CD8-positive, alpha-beta memory T cell (primary cell): ENCODE measurements at regions of chr4 and their contacts with region 1.

Region 1: GRCh38 chr4:147683717-147684700 is at the start of gene PRMT9:
- DNase-seq: peak; percentile 76 to 88 (median 85)
- H3K4me3 ChIP-seq: peak within 1 kb of the TSS; percentile 81
- H3K4me3 Mint-ChIP-seq: peak within 1 kb of the TSS; percentile 81 to 99 (median 96)
- H3K27ac ChIP-seq: peak within 1 kb of the TSS; percentile 93
- H3K27ac Mint-ChIP-seq: peak within 1 kb of the TSS; percentile 91 to 99 (median 98)
- H3K4me1 ChIP-seq: peaks cover 13% of the 10 kb centered on the region
- H3K4me1 Mint-ChIP-seq: peaks cover 30 to 45% (median 43%) of the 10 kb centered on the region in 3 donors
- H3K27me3 ChIP-seq: no peaks in the 10 kb centered on the region
- H3K27me3 Mint-ChIP-seq: peaks cover 0 to 10% of the 10 kb centered on the region in 2 donors
- total RNA-seq, gene PRMT9: 5.5 to 6.9 TPM

Region 2: GRCh38 chr4:145936142-145936996 is 1747.6 kb before region 1 on chr4:
- CTCF ChIA-PET with region 1: no interaction called
- POLR2A ChIA-PET with region 1: interaction called, 11 read pairs
- DNase-seq: peak; percentile 48 to 83 (median 71)
- H3K4me3 ChIP-seq: peak overlapping the region; percentile 69
- H3K4me3 Mint-ChIP-seq: peak overlapping the region; percentile 88 to 97 (median 96)
- H3K27ac ChIP-seq: peak overlapping the region; percentile 41
- H3K27ac Mint-ChIP-seq: peak overlapping the region; percentile 75 to 98 (median 96)
- H3K4me1 ChIP-seq: no peaks in the 10 kb centered on the region
- H3K4me1 Mint-ChIP-seq: peaks cover 29 to 53% (median 42%) of the 10 kb centered on the region in 3 donors
- H3K27me3 ChIP-seq: no peaks in the 10 kb centered on the region
- H3K27me3 Mint-ChIP-seq: peaks cover 0 to 8% of the 10 kb centered on the region in 2 donors

Region 3: DNA sequence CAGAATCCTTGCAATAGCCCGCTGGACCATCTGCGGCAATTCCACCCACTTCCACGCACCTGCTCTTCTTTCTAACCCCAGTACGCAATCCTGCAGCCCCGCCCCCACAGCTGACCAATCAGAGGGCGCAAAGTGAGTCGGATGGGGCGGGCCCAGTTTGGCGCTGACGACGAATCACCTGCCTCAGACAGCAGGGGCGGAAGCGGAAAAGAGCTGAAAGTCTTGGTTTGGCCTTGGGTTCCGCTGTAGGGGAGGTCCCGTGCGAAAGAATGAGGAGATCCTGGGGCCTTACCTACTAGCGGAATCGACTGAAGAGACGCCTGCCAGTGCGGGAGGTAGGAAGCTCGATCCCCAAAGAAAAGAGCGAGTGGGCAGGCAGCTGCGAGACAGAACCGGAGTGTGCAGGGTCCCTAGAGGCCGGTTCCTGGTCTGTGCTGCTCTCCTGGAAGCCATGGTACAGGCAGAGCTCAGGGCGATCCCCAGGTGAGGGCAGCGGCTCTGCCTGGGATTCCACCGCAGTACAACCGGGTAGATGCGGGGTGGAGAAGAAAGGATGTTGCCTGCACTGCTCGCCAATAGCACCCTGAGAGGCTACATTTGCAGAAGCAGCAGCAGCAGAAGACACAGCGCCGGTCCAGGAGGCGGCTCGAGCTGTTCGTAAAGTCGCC is 66.7 kb before region 1 on chr4 and contains the start of gene TMEM184C:
- CTCF ChIA-PET with region 1: no interaction called
- POLR2A ChIA-PET with region 1: interaction called, 34 read pairs
- DNase-seq: peak; percentile 96 to 98 (median 98)
- H3K4me3 ChIP-seq: peak within 1 kb of the TSS; percentile 95
- H3K4me3 Mint-ChIP-seq: peak within 1 kb of the TSS; percentile 89 to 100 (median 94)
- H3K27ac ChIP-seq: peak within 1 kb of the TSS; percentile 89
- H3K27ac Mint-ChIP-seq: peak within 1 kb of the TSS; percentile 82 to 100 (median 96)
- H3K4me1 ChIP-seq: peaks cover 37% of the 10 kb centered on the region
- H3K4me1 Mint-ChIP-seq: peaks cover 38 to 49% (median 46%) of the 10 kb centered on the region in 3 donors
- H3K27me3 ChIP-seq: no peaks in the 10 kb centered on the region
- H3K27me3 Mint-ChIP-seq: peaks cover 0 to 3% of the 10 kb centered on the region in 2 donors
- total RNA-seq, gene TMEM184C: 31.6 to 35.9 TPM

Region 4: GRCh38 chr4:147707865-147708672 is 24.1 kb after region 1 on chr4:
- CTCF ChIA-PET with region 1: interaction called, 11 read pairs
- POLR2A ChIA-PET with region 1: no interaction called
- DNase-seq: peak; percentile 36 to 65 (median 47)
- H3K4me3 ChIP-seq: no peak overlapping the region
- H3K4me3 Mint-ChIP-seq: no peak overlapping the region
- H3K27ac ChIP-seq: no peak overlapping the region
- H3K27ac Mint-ChIP-seq: no peak overlapping the region
- H3K4me1 ChIP-seq: no peaks in the 10 kb centered on the region
- H3K4me1 Mint-ChIP-seq: peaks cover 0 to 5% (median 4%) of the 10 kb centered on the region in 3 donors
- H3K27me3 ChIP-seq: no peaks in the 10 kb centered on the region
- H3K27me3 Mint-ChIP-seq: no peaks in the 10 kb centered on the region

Region 5: DNA sequence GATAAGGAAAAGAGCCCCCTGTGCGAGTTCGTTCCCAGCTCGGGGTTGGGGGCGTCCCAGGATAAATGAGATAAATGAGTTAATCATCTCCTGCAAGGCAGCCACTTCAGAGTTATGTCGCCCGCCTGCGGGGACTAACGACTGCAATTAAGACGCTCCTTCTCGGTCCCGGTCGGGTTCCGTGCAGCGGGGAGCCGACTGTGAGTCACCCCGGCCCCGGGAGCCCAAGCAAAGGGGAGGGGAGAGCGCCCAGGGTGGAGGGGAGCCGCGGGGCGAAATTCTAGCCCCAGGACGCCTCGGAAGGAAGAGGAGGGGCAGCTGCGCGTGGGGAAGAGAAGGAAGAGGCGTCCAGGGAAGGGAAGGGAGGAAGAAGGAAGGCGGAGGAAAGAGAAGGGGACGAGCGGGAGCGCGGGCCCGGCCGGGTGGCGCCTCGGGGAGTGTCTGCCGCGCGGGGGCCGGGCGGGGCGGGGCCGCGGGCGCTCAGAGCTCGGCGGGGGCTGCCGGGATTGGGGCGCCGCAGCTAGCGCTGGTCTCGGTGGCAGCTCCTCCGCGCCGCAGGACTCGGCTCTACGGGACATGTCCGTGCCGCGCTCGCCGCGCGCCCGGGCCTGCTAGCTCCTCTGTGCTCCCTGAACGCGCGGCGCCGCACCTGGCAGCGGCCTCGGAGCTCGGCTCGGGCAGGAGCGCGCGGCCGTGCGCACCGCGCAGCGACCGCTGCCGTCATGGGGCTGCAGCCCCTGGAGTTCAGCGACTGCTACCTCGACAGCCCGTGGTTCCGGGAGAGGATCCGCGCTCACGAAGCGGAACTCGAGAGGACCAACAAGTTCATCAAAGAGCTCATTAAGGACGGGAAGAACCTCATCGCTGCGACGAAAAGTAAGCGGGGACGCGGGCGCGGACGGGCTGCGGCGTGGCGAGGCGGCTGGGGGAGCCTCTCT is 47.8 kb after region 1 on chr4 and contains the start of gene ARHGAP10:
- CTCF ChIA-PET with region 1: interaction called, 7 read pairs
- POLR2A ChIA-PET with region 1: interaction called, 16 read pairs
- DNase-seq: peak; percentile 55 to 76 (median 61)
- H3K4me3 ChIP-seq: peak within 1 kb of the TSS; percentile 72
- H3K4me3 Mint-ChIP-seq: peak within 1 kb of the TSS; percentile 84 to 98 (median 93)
- H3K27ac ChIP-seq: peak within 1 kb of the TSS; percentile 47
- H3K27ac Mint-ChIP-seq: peak within 1 kb of the TSS; percentile 89 to 96 (median 93)
- H3K4me1 ChIP-seq: peaks cover 23% of the 10 kb centered on the region
- H3K4me1 Mint-ChIP-seq: peaks cover 40 to 50% (median 47%) of the 10 kb centered on the region in 3 donors
- H3K27me3 ChIP-seq: no peaks in the 10 kb centered on the region
- H3K27me3 Mint-ChIP-seq: no peaks in the 10 kb centered on the region
- total RNA-seq, gene ARHGAP10: 8.6 to 9.7 TPM